ENCODE measurements at regions of chr13 and their contacts with region 1.

Region 1: DNA sequence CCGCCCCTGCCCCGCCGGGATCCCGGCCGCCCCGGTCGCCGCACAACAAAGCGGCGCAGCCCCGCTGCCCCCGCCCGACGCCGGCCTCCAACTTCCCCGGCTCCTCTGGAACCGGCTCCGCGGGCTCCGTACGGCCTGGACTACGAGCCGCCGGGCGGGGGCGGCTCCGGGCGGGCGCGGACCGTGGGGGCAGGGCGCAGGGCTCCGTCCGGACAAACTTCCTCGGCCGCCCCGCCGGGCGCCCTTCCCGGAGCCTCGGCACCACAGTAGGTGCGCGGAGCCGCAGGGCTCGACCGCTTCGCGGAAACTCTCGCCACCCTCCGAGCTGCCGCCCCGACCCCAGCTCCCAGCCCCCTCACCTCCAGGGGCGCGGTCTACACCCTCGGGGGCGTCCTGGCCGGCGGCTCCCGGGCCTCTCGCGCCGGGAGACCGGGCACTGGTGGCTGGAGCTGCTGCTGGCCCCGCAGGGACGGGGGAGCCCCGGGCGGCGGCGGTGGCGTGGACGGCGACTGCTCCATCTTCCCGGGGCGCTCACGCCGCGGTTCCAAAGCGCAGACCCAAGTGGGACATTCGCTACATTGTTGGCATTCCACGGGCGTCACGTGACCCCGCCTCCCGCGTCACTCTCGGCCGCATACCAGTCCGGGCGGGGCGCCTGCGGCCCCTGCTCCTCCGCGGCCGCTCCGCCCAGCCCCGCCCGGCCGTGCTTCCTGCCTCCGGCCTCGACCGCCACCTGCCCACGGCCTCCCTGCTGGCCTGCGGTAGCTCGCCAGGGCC is at the start of gene LATS2:
- DNase-seq: peak; percentile 88
- H3K4me3 ChIP-seq: peak within 1 kb of the TSS; percentile 99
- H3K27ac ChIP-seq: peak within 1 kb of the TSS; percentile 93
- H3K4me1 ChIP-seq: peaks cover 22% of the 10 kb centered on the region
- H3K27me3 ChIP-seq: no peaks in the 10 kb centered on the region
- CTCF ChIP-seq: no peak
- total RNA-seq, gene LATS2: 13.1 and 14.2 TPM in 2 replicates

Region 2: GRCh38 chr13:20940083-20940880 is 120.9 kb before region 1 on chr13:
- CTCF ChIA-PET with region 1: no interaction called
- POLR2A ChIA-PET with region 1: no interaction called
- intact Hi-C with region 1: loop called (anchors 5 kb)
- DNase-seq: no peak
- H3K4me3 ChIP-seq: no peak overlapping the region
- H3K27ac ChIP-seq: no peak overlapping the region
- H3K4me1 ChIP-seq: peaks cover 6% of the 10 kb centered on the region
- H3K27me3 ChIP-seq: no peaks in the 10 kb centered on the region
- CTCF ChIP-seq: no peak

Region 3: DNA sequence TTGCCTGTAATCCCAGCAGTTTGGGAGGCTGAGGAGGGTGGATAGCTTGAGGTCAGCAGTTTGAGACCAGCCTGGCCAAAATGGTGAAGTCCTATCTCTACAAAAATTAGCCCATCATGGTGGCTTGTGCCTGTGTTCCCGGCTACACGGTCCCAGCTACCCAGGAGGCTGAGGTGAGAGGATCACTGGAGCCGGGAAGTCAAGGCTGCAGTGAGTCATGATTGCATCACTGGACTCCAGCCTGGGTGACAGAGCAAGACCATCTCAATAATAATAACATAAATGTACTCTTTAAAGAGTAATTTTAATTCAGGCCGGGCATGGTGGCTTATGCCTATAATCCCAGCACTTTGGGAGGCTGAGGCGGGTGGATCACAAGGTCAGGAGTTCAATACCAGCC is 76.5 kb after region 1 on chr13:
- CTCF ChIA-PET with region 1: no interaction called
- POLR2A ChIA-PET with region 1: no interaction called
- intact Hi-C with region 1: loop called (anchors 10 kb)
- DNase-seq: no peak
- H3K4me3 ChIP-seq: no peak overlapping the region
- H3K27ac ChIP-seq: no peak overlapping the region
- H3K4me1 ChIP-seq: peaks cover 4% of the 10 kb centered on the region
- H3K27me3 ChIP-seq: no peaks in the 10 kb centered on the region
- CTCF ChIP-seq: no peak

Measured in A673 (cell line).